Caco-2 (cell line): ENCODE measurements at regions of chr16 and their contacts with region 1.

Region 1: DNA sequence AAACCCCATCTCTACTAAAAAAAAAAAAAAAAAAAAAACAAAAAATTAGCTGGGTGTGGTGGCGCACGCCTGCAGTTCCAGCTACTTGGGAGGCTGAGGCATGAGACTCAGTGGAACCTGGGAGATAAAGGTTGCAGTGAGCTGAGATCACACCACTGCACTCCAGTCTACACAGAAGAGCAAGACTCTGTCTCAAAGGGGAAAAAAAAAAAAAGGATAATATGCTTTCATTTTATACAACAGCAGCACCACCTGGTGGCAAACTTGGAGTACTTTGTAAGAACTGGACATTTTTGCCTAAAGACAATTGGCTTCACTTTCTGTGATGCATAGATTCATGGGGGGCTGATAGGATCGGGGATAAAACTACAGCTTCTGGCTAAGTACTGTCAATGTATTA is 8.5 kb downstream of the CHTF8 start:
- DNase-seq: peak; percentile 69 to 79
- H3K4me3 ChIP-seq: no peak overlapping the region
- H3K4me3 Mint-ChIP-seq: no peak overlapping the region
- H3K27ac Mint-ChIP-seq: no peak overlapping the region
- H3K4me1 ChIP-seq: no peaks in the 10 kb centered on the region
- H3K4me1 Mint-ChIP-seq: no peaks in the 10 kb centered on the region
- H3K27me3 ChIP-seq: no peaks in the 10 kb centered on the region
- H3K27me3 Mint-ChIP-seq: no peaks in the 10 kb centered on the region
- CTCF ChIP-seq: peak; percentile 67 to 83

Region 2: DNA sequence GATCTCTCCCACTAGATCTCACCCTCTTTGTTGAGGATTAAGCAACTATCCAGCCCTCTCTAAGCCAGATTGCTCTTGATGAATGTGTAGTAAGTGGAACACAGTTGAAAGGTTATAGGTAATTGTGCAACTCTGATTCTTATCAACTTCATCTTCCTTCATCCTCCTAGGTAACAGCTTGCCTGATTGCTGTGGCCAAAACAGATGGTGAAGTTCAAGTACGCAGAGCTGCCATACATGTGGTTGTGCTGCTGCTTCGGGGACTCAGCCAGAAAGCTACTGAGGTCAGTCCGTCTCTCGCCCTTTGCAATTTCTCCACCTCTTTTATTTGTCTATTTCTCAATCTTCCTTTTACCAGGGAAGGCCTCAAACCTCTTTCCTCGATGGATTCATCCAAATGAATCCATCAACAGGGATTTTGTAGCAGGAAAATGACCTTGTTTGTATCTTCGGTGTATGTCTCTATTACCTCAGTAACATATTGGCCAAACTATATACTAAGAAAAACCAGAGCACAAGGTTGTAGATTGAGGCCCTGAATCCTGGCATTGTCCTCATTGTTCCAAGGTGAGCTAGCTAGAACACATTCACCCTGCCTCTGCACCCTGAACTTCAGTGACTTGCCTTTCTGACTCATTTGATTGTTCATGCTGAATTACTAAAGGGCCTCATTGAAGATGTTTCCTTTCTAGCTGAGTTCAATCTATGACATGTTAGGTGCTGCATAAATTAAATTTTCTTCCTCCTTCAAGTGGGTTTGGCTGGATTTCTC is 83.6 kb before region 1 on chr16:
- CTCF ChIA-PET with region 1: no interaction called
- POLR2A ChIA-PET with region 1: no interaction called
- intact Hi-C with region 1: no loop called
- DNase-seq: peak in 1 of 2 experiments; percentile 28
- H3K4me3 ChIP-seq: no peak overlapping the region
- H3K4me3 Mint-ChIP-seq: no peak overlapping the region
- H3K27ac Mint-ChIP-seq: no peak overlapping the region
- H3K4me1 ChIP-seq: peaks cover 14% of the 10 kb centered on the region
- H3K4me1 Mint-ChIP-seq: peaks cover 10% of the 10 kb centered on the region
- H3K27me3 ChIP-seq: no peaks in the 10 kb centered on the region
- H3K27me3 Mint-ChIP-seq: no peaks in the 10 kb centered on the region
- CTCF ChIP-seq: no peak

Region 3: GRCh38 chr16:69112285-69113129 is 11.4 kb before region 1 on chr16:
- CTCF ChIA-PET with region 1: interaction called, 15 read pairs
- POLR2A ChIA-PET with region 1: no interaction called
- intact Hi-C with region 1: no loop called
- DNase-seq: peak; percentile 84 to 85
- H3K4me3 ChIP-seq: no peak overlapping the region
- H3K4me3 Mint-ChIP-seq: no peak overlapping the region
- H3K27ac Mint-ChIP-seq: no peak overlapping the region
- H3K4me1 ChIP-seq: no peaks in the 10 kb centered on the region
- H3K4me1 Mint-ChIP-seq: no peaks in the 10 kb centered on the region
- H3K27me3 ChIP-seq: no peaks in the 10 kb centered on the region
- H3K27me3 Mint-ChIP-seq: no peaks in the 10 kb centered on the region
- CTCF ChIP-seq: peak; percentile 92 to 96

Region 4: DNA sequence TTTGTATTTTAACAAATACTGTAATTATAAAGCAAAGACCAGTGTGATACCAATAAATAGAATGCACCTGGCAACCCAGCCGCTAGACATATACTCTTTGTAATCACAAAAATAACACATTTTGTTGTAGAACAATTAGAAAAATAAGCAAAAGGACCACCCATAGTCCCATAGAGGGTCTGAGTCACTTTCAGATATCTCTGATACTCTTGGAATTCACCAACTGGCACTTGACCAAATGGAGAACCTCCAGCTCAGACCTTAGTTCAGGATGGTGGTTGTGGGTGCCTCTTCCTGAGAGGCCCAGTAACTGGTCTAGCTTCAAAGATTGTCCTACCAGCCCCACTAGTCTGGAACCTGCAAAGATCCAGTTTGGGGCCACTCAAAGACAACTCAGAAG is 262.7 kb after region 1 on chr16:
- CTCF ChIA-PET with region 1: no interaction called
- POLR2A ChIA-PET with region 1: no interaction called
- intact Hi-C with region 1: no loop called
- DNase-seq: no peak
- H3K4me3 ChIP-seq: no peak overlapping the region
- H3K4me3 Mint-ChIP-seq: peak overlapping the region; percentile 89
- H3K27ac Mint-ChIP-seq: no peak overlapping the region
- H3K4me1 ChIP-seq: peaks cover 8% of the 10 kb centered on the region
- H3K4me1 Mint-ChIP-seq: peaks cover 26% of the 10 kb centered on the region
- H3K27me3 ChIP-seq: no peaks in the 10 kb centered on the region
- H3K27me3 Mint-ChIP-seq: no peaks in the 10 kb centered on the region
- CTCF ChIP-seq: no peak